ENCODE measurements at regions of chr10 and their contacts with region 1.

Region 1: GRCh38 chr10:22003079-22003913 is at the start of gene DNAJC1:
- DNase-seq: peak; percentile 87 to 99
- H3K4me3 ChIP-seq: peak within 1 kb of the TSS; percentile 70
- H3K4me1 ChIP-seq: peaks cover 25% of the 10 kb centered on the region
- H3K27me3 ChIP-seq: no peaks in the 10 kb centered on the region

Region 2: GRCh38 chr10:22316285-22317120 is 313.2 kb after region 1 on chr10 and contains the start of gene COMMD3:
- in situ Hi-C with region 1: loop called (anchors 10 kb)
- DNase-seq: peak; percentile 78 to 88
- H3K4me3 ChIP-seq: peak within 1 kb of the TSS; percentile 66
- H3K4me1 ChIP-seq: peaks cover 30% of the 10 kb centered on the region
- H3K27me3 ChIP-seq: no peaks in the 10 kb centered on the region

Region 3: DNA sequence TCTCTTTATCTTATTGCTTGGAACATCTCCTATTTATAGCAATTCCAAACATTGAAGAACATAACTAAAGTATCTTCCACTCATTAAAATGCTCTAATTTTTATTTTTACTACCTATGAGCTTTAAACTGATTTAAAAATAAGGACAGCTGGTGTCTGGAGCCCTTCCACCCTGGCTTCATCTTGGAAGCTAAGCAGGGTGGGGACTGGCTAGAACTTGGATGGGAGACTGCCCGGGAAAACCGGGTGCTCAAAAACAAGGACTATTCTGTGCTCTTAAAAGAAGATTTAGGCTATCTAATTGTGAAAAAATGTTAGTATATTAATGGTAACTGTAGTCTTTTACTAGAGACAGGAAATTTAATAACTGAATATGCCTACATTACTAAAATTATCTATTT is 993.8 kb after region 1 on chr10:
- in situ Hi-C with region 1: loop called (anchors 10 kb)
- DNase-seq: peak in 1 of 2 experiments; percentile 33
- H3K4me3 ChIP-seq: no peak overlapping the region
- H3K4me1 ChIP-seq: no peaks in the 10 kb centered on the region
- H3K27me3 ChIP-seq: peaks cover 17% of the 10 kb centered on the region

Region 4: DNA sequence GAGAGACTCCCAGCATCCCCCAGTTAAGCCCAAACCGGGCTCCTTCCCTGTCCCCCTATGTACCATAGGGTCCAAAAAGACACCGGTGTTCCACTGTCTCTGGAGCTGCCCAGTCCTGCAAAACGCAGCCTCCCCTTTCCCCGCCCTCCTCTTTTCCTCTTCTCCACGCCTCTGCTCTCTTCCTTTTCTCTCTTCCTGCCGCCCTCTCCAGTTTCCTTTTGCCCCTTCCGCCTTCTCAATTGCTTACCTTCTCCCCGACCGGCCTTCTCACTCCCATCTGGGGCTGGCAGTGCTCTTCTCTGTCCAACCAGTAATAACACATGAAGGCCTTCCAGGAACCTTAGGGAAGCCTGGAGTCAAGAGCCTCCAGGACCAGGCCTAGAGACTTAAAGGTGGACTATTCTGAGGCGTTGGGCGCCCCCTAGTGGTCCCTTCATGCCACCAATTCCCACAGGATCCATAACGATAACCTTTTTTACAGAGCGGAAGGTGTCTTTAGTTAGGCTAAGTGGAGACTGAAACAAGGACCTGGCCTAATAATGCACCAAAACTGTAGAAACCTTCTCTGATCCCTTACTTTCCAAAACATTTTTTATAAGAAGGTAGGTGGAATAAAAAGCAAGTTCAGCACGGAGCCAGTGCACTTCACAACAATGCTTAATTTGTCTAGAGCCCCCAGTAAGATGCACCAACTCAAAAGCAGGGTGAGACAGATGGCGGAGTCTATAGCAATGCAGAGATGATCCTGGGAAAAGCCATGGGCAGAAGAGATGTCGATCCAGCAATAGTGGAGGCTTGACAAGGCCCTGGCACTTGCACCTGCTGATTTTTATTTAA is 1064.9 kb after region 1 on chr10:
- in situ Hi-C with region 1: loop called (anchors 10 kb)
- DNase-seq: peak; percentile 82 to 86
- H3K4me3 ChIP-seq: no peak overlapping the region
- H3K4me1 ChIP-seq: no peaks in the 10 kb centered on the region
- H3K27me3 ChIP-seq: no peaks in the 10 kb centered on the region

Measured in HAP-1 (cell line).